Activated CD4-positive, alpha-beta T cell treated with anti-CD3 and anti-CD28 coated beads for 36 hours (primary cell): ENCODE measurements at regions of chr17 and their contacts with region 1.

Region 1: DNA sequence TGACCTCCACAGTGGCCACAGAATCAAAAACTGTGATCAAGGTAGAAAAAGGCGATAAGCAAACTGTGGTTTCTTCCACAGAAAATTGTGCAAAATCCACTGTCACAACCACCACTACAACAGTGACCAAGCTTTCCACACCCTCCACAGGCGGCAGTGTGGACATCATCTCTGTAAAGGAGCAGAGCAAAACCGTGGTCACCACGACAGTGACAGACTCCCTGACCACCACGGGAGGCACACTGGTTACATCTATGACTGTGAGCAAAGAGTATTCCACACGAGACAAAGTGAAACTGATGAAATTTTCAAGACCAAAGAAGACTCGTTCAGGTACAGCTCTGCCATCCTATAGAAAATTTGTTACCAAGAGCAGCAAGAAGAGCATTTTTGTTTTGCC is 83.6 kb downstream of the C17orf58 start:
- DNase-seq: peak; percentile 33
- ATAC-seq: peak; percentile 21
- H3K4me3 Mint-ChIP-seq: no peak overlapping the region
- H3K27ac Mint-ChIP-seq: no peak overlapping the region
- H3K4me1 Mint-ChIP-seq: peaks cover 28% of the 10 kb centered on the region
- H3K27me3 Mint-ChIP-seq: no peaks in the 10 kb centered on the region

Region 2: GRCh38 chr17:67836205-67836987 is 76.3 kb before region 1 on chr17:
- CTCF ChIA-PET with region 1: no interaction called
- POLR2A ChIA-PET with region 1: no interaction called
- intact Hi-C with region 1: loop called in 1 of 2 experiments (anchors 5 kb)
- DNase-seq: no peak
- ATAC-seq: peak; percentile 93
- H3K4me3 Mint-ChIP-seq: peak overlapping the region; percentile 29
- H3K27ac Mint-ChIP-seq: peak overlapping the region; percentile 68
- H3K4me1 Mint-ChIP-seq: peaks cover 76% of the 10 kb centered on the region
- H3K27me3 Mint-ChIP-seq: no peaks in the 10 kb centered on the region

Region 3: GRCh38 chr17:67942810-67943209 is 30.2 kb after region 1 on chr17:
- CTCF ChIA-PET with region 1: interaction called, 6 read pairs
- POLR2A ChIA-PET with region 1: no interaction called
- intact Hi-C with region 1: loop called in 1 of 2 experiments (anchors 1 kb)
- DNase-seq: peak; percentile 23
- ATAC-seq: peak; percentile 36
- H3K4me3 Mint-ChIP-seq: no peak overlapping the region
- H3K27ac Mint-ChIP-seq: no peak overlapping the region
- H3K4me1 Mint-ChIP-seq: no peaks in the 10 kb centered on the region
- H3K27me3 Mint-ChIP-seq: no peaks in the 10 kb centered on the region

Region 4: GRCh38 chr17:67980456-67980855 is 67.8 kb after region 1 on chr17:
- CTCF ChIA-PET with region 1: no interaction called
- POLR2A ChIA-PET with region 1: no interaction called
- intact Hi-C with region 1: no loop called
- DNase-seq: no peak
- ATAC-seq: no peak
- H3K4me3 Mint-ChIP-seq: no peak overlapping the region
- H3K27ac Mint-ChIP-seq: no peak overlapping the region
- H3K4me1 Mint-ChIP-seq: no peaks in the 10 kb centered on the region
- H3K27me3 Mint-ChIP-seq: no peaks in the 10 kb centered on the region